Calu3 (cell line): ENCODE measurements at regions of chr4 and their contacts with region 1.

Region 1: GRCh38 chr4:2276581-2277325 is 14.8 kb upstream of the MXD4 start:
- DNase-seq: no peak
- H3K4me3 Mint-ChIP-seq: no peak overlapping the region
- H3K27ac Mint-ChIP-seq: no peak overlapping the region
- H3K4me1 Mint-ChIP-seq: no peaks in the 10 kb centered on the region
- H3K27me3 Mint-ChIP-seq: peaks cover 48% of the 10 kb centered on the region
- CTCF ChIP-seq: no peak

Region 2: GRCh38 chr4:2041234-2042130 is 235.3 kb before region 1 on chr4:
- CTCF ChIA-PET with region 1: no interaction called
- intact Hi-C with region 1: no loop called
- DNase-seq: peak; percentile 80
- H3K4me3 Mint-ChIP-seq: peak overlapping the region; percentile 82
- H3K27ac Mint-ChIP-seq: no peak overlapping the region
- H3K4me1 Mint-ChIP-seq: peaks cover 4% of the 10 kb centered on the region
- H3K27me3 Mint-ChIP-seq: peaks cover 7% of the 10 kb centered on the region
- CTCF ChIP-seq: no peak

Region 3: DNA sequence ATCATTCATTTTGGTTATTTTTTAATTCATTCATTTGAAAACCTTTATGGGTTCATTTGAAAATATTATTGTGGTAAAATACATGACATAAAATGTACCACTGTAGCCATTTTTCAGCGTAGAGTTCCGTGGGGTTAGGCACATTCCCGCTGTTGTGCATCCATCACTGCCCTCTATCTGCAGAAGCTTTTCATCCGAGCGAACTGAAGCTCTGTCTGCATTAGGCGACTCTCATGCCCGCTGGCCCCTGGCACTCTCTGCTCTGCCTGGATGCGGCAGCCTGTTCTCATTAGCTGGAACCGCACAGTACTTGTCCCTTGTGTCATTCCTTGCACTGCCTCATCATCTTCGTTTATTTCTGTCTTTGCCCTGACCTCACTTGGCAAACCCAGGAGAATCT is 159.5 kb after region 1 on chr4:
- CTCF ChIA-PET with region 1: no interaction called
- intact Hi-C with region 1: loop called (anchors 5 kb)
- DNase-seq: no peak
- H3K4me3 Mint-ChIP-seq: no peak overlapping the region
- H3K27ac Mint-ChIP-seq: no peak overlapping the region
- H3K4me1 Mint-ChIP-seq: no peaks in the 10 kb centered on the region
- H3K27me3 Mint-ChIP-seq: peaks cover 14% of the 10 kb centered on the region
- CTCF ChIP-seq: no peak